Activated B cell treated with CpG ODN at 0.5 μM for 24 hours (primary cell): ENCODE measurements at regions of chr12 and their contacts with region 1.

Region 1: GRCh38 chr12:64669270-64669842 is 59.1 kb downstream of the RASSF3 start:
- DNase-seq: no peak
- ATAC-seq: peak; percentile 67
- H3K4me3 Mint-ChIP-seq: peak overlapping the region; percentile 80
- H3K27ac Mint-ChIP-seq: peak overlapping the region; percentile 84
- H3K4me1 Mint-ChIP-seq: peaks cover 97% of the 10 kb centered on the region
- H3K27me3 Mint-ChIP-seq: no peaks in the 10 kb centered on the region
- CTCF ChIP-seq: no peak

Region 2: DNA sequence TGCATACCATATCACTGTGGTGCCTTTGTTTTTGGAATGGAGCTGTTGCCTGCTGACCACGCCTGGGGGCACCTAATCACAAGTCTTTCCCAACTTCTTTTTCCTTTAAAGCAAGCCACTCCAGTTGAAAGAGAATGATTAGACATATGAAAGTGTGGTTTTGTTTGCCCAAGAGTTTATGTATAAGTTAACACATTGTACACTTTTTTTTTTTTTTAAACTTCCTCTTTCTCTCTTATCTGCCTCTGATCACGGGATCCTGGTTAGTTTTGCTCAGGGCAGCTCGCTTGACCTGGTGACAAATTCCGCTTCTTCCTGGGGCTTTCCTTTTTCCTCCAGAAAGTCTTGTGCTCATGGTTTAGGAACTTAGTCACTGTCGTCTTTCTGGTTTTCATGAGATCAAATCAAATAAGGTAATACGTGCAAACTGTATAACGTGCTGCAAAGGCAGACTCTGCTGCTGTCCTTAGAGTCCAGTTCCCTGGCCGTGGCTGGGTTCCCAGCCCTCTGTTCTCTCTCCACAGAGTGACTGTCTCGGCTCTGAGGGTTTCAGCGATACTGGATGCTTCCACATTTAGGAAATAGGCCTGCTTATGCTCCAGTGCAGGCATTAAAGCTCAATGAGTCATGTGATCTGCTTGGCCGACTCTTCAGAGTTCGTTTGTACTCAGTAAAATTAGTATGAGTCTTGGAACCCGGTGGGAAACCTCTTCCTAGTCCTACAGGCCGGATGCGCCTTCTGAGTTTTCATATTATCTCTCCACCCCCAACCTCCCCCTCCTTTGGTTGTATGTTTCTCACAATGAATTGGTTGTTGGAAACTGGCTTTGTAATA is 43.9 kb before region 1 on chr12:
- CTCF ChIA-PET with region 1: interaction called, 3 read pairs
- POLR2A ChIA-PET with region 1: interaction called, 12 read pairs
- intact Hi-C with region 1: loop called (anchors 2 kb)
- DNase-seq: no peak
- ATAC-seq: peak; percentile 51
- H3K4me3 Mint-ChIP-seq: peak overlapping the region; percentile 85
- H3K27ac Mint-ChIP-seq: peak overlapping the region; percentile 96
- H3K4me1 Mint-ChIP-seq: peaks cover 85% of the 10 kb centered on the region
- H3K27me3 Mint-ChIP-seq: no peaks in the 10 kb centered on the region
- CTCF ChIP-seq: no peak

Region 3: DNA sequence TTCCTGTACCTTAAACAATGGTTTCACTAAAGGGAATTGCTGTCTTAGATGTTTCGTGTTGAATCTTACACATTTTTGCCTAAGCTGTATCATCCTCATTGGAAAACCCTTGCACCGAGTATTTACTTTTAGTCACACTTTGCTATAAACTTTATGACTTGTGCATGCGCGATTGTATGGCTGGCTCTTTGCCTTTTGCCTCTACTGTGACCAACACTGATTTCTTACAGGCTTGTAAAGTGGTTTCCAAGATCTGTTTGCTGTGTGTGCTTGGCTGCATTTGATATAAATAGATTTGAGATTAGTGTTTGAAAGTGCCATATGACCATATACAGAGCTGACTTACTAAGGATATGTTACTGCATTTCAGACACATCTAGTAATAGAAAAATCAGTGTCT is 18.6 kb before region 1 on chr12:
- CTCF ChIA-PET with region 1: no interaction called
- POLR2A ChIA-PET with region 1: interaction called, 6 read pairs
- intact Hi-C with region 1: loop called (anchors 1 kb)
- DNase-seq: no peak
- ATAC-seq: no peak
- H3K4me3 Mint-ChIP-seq: no peak overlapping the region
- H3K27ac Mint-ChIP-seq: no peak overlapping the region
- H3K4me1 Mint-ChIP-seq: peaks cover 71% of the 10 kb centered on the region
- H3K27me3 Mint-ChIP-seq: no peaks in the 10 kb centered on the region
- CTCF ChIP-seq: no peak

Region 4: DNA sequence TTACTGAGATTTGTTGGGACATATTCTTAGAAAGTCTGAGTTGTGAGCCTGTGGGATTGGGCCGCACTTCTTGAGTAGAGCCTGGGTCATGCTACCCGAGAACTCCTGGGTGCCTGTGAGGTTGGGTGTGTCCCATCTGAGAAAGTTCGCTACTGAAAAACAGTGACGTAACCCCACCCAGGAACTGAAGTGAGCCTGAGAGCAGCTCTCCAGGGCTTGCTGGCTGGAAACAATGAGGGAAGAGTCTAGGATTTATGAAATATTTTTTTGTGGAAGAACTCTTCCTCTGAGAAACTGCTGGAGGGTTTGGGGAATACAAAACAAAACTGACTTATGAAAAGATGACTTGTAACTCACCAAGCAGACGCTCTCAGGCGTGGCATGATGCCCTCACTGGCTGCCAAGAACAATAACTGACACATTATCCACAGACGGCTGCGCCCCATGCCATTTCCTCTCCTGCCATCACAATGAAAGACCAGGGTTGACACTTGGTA is 10.2 kb after region 1 on chr12:
- CTCF ChIA-PET with region 1: interaction called, 4 read pairs
- POLR2A ChIA-PET with region 1: interaction called, 4 read pairs
- intact Hi-C with region 1: loop called (anchors 1 kb)
- DNase-seq: no peak
- ATAC-seq: peak; percentile 64
- H3K4me3 Mint-ChIP-seq: peak overlapping the region; percentile 53
- H3K27ac Mint-ChIP-seq: peak overlapping the region; percentile 82
- H3K4me1 Mint-ChIP-seq: peaks cover 95% of the 10 kb centered on the region
- H3K27me3 Mint-ChIP-seq: no peaks in the 10 kb centered on the region
- CTCF ChIP-seq: no peak

Region 5: DNA sequence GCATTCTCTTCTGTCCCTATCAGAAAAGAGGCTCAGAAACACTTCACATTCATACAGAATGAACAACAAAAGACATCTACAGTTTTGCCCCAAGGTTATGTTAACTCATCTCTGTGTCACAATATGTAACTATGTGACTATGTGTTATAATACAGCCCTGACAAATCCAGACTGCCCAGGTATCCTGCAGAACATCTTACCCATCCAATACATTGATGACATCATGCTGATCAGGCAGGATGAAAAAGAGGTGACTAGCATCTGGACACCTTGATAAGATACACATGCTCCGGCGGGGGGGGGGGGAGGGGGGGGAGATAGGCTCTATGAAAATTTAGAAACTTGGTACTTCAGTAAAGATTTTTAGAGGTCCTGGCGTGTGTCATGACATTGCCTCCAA is 98.1 kb after region 1 on chr12:
- CTCF ChIA-PET with region 1: no interaction called
- POLR2A ChIA-PET with region 1: no interaction called
- intact Hi-C with region 1: no loop called
- DNase-seq: no peak
- ATAC-seq: no peak
- H3K4me3 Mint-ChIP-seq: no peak overlapping the region
- H3K27ac Mint-ChIP-seq: no peak overlapping the region
- H3K4me1 Mint-ChIP-seq: no peaks in the 10 kb centered on the region
- H3K27me3 Mint-ChIP-seq: peaks cover 4% of the 10 kb centered on the region
- CTCF ChIP-seq: no peak